ENCODE measurements at regions of chr7 and their contacts with region 1.

Region 1: GRCh38 chr7:156892821-156893706 is at the start of gene LMBR1:
- DNase-seq: peak; percentile 95
- H3K4me3 Mint-ChIP-seq: peak within 1 kb of the TSS; percentile 85
- H3K27ac Mint-ChIP-seq: peak within 1 kb of the TSS; percentile 85
- H3K4me1 Mint-ChIP-seq: peaks cover 62% of the 10 kb centered on the region
- H3K27me3 Mint-ChIP-seq: no peaks in the 10 kb centered on the region
- total RNA-seq, gene LMBR1: 51.3 to 51.8 TPM

Region 2: GRCh38 chr7:156640257-156640948 is 252.7 kb before region 1 on chr7 and contains the start of gene RNF32:
- CTCF ChIA-PET with region 1: no interaction called
- POLR2A ChIA-PET with region 1: interaction called, 12 read pairs
- DNase-seq: peak; percentile 99
- H3K4me3 Mint-ChIP-seq: peak within 1 kb of the TSS; percentile 88
- H3K27ac Mint-ChIP-seq: peak within 1 kb of the TSS; percentile 96
- H3K4me1 Mint-ChIP-seq: peaks cover 45% of the 10 kb centered on the region
- H3K27me3 Mint-ChIP-seq: peaks cover 5% of the 10 kb centered on the region
- total RNA-seq, gene RNF32: 3.4 to 4.1 TPM

Region 3: DNA sequence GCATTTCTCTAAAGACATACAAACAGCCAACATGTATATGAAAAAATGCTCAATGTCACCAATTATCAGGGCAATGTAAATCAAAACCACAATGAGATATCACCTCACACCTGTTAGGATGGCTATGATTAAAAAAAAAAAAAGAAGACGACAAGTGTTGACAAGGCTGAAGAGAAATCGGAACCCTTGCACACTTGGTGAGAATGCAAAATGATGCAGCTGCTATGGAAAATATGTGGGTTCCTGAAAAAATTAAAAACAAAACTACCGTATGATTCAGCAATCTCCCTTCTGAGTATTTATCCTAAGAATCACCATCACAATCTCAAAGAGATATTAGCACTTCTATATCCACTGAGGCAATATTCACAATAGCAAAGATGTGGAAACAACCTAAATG is 11.4 kb before region 1 on chr7:
- CTCF ChIA-PET with region 1: interaction called, 6 read pairs
- POLR2A ChIA-PET with region 1: interaction called, 10 read pairs
- DNase-seq: no peak
- H3K4me3 Mint-ChIP-seq: no peak overlapping the region
- H3K27ac Mint-ChIP-seq: no peak overlapping the region
- H3K4me1 Mint-ChIP-seq: peaks cover 41% of the 10 kb centered on the region
- H3K27me3 Mint-ChIP-seq: no peaks in the 10 kb centered on the region

Region 4: GRCh38 chr7:156903232-156903909 is 10.3 kb after region 1 on chr7:
- CTCF ChIA-PET with region 1: interaction called, 8 read pairs
- POLR2A ChIA-PET with region 1: interaction called, 14 read pairs
- DNase-seq: no peak
- H3K4me3 Mint-ChIP-seq: no peak overlapping the region
- H3K27ac Mint-ChIP-seq: peak overlapping the region; percentile 42
- H3K4me1 Mint-ChIP-seq: peaks cover 8% of the 10 kb centered on the region
- H3K27me3 Mint-ChIP-seq: peaks cover 11% of the 10 kb centered on the region

Region 5: GRCh38 chr7:156927571-156928405 is 34.7 kb after region 1 on chr7:
- CTCF ChIA-PET with region 1: interaction called, 11 read pairs
- POLR2A ChIA-PET with region 1: interaction called, 19 read pairs
- DNase-seq: no peak
- H3K4me3 Mint-ChIP-seq: no peak overlapping the region
- H3K27ac Mint-ChIP-seq: no peak overlapping the region
- H3K4me1 Mint-ChIP-seq: peaks cover 27% of the 10 kb centered on the region
- H3K27me3 Mint-ChIP-seq: peaks cover 40% of the 10 kb centered on the region

Region 6: GRCh38 chr7:156949541-156950380 is 56.7 kb after region 1 on chr7 and contains the start of gene NOM1:
- CTCF ChIA-PET with region 1: interaction called, 25 read pairs
- POLR2A ChIA-PET with region 1: interaction called, 28 read pairs
- DNase-seq: peak; percentile 92
- H3K4me3 Mint-ChIP-seq: peak within 1 kb of the TSS; percentile 100
- H3K27ac Mint-ChIP-seq: peak within 1 kb of the TSS; percentile 85
- H3K4me1 Mint-ChIP-seq: peaks cover 38% of the 10 kb centered on the region
- H3K27me3 Mint-ChIP-seq: peaks cover 21% of the 10 kb centered on the region
- total RNA-seq, gene NOM1: 22.1 to 22.8 TPM